ENCODE measurements at regions of chr11 and their contacts with region 1.

Region 1: GRCh38 chr11:9103208-9103898 is 12.0 kb upstream of the SCUBE2 start:
- DNase-seq: no peak
- H3K4me3 Mint-ChIP-seq: no peak overlapping the region
- H3K27ac Mint-ChIP-seq: no peak overlapping the region
- H3K4me1 Mint-ChIP-seq: peaks cover 4% of the 10 kb centered on the region
- H3K27me3 Mint-ChIP-seq: peaks cover 43% of the 10 kb centered on the region

Region 2: DNA sequence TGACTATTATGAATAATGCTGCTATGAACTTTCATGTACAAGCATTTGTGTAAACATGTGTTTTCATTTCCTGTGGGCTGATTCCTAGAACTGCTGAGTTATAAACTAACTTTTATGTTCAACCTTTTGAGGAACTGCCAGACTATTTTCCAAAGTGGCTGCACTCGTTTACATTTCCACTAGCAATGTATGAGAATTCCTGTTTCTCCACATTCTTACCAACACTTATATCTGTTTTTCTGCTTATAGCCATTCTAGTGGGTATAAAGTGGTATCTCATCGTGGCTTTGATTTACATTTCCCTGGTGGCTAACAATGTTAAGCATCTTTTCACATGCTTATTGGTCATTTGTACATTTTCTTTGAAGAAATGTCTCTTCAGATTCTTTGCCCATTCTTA is 23.3 kb after region 1 on chr11:
- intact Hi-C with region 1: loop called (anchors 1 kb)
- DNase-seq: no peak
- H3K4me3 Mint-ChIP-seq: no peak overlapping the region
- H3K27ac Mint-ChIP-seq: no peak overlapping the region
- H3K4me1 Mint-ChIP-seq: peaks cover 13% of the 10 kb centered on the region
- H3K27me3 Mint-ChIP-seq: peaks cover 7% of the 10 kb centered on the region

Measured in activated T-helper 2 cell treated with anti-CD3 and anti-CD28 coated beads, Interferon-gamma antibody, Interleukin-2, Interleukin-4, amounts not matched to agents 10 μg/mL and 5 μg/mL and 100 μg/mL, durations not matched to agents 14 hours and 24 hours and 36 hours (primary cell).